IMR-90 (cell line): ENCODE measurements at regions of chrX and their contacts with region 1.

Region 1: GRCh38 chrX:78708262-78708661 is 39.3 kb upstream of the LPAR4 start:
- DNase-seq: peak; percentile 41
- ATAC-seq: peak; percentile 73
- H3K4me3 ChIP-seq: no peak overlapping the region
- H3K27ac ChIP-seq: no peak overlapping the region
- H3K4me1 ChIP-seq: no peaks in the 10 kb centered on the region
- H3K27me3 ChIP-seq: no peaks in the 10 kb centered on the region
- CTCF ChIP-seq: peak; percentile 61
- POLR2A ChIP-seq: no peak
- RAD21 ChIP-seq: peak; percentile 68

Region 2: GRCh38 chrX:78595901-78596502 is 112.3 kb before region 1 on chrX:
- CTCF ChIA-PET with region 1: interaction called, 6 read pairs
- POLR2A ChIA-PET with region 1: no interaction called
- dilution Hi-C with region 1: no loop called
- in situ Hi-C with region 1: no loop called
- intact Hi-C with region 1: loop called (anchors 1 kb)
- DNase-seq: no peak
- ATAC-seq: no peak
- H3K4me3 ChIP-seq: no peak overlapping the region
- H3K27ac ChIP-seq: no peak overlapping the region
- H3K4me1 ChIP-seq: no peaks in the 10 kb centered on the region
- H3K27me3 ChIP-seq: no peaks in the 10 kb centered on the region
- CTCF ChIP-seq: peak; percentile 40
- POLR2A ChIP-seq: no peak
- RAD21 ChIP-seq: peak; percentile 53